ENCODE measurements at regions of chr1 and their contacts with region 1.

Region 1: GRCh38 chr1:152189657-152190442 is 30.8 kb upstream of the RPTN start:
- DNase-seq: peak; percentile 59 to 67 (median 61)
- ATAC-seq: peak; percentile 88
- H3K4me3 ChIP-seq: no peak overlapping the region
- H3K27ac ChIP-seq: no peak overlapping the region
- H3K4me1 ChIP-seq: peaks cover 0 to 8% of the 10 kb centered on the region in 2 experiments; a peak in 1 of 5 replicates
- H3K27me3 ChIP-seq: no peaks in the 10 kb centered on the region
- CTCF ChIP-seq: peak; percentile 79 to 85 (median 80)
- EP300 ChIP-seq: no peak
- POLR2A ChIP-seq: no peak
- RAD21 ChIP-seq: peak; percentile 62 to 78

Region 2: GRCh38 chr1:152141974-152142584 is 47.8 kb before region 1 on chr1:
- CTCF ChIA-PET with region 1: interaction called, 19 read pairs
- POLR2A ChIA-PET with region 1: no interaction called
- in situ Hi-C with region 1: no loop called
- intact Hi-C with region 1: no loop called
- DNase-seq: peak; percentile 15 to 59 (median 17)
- ATAC-seq: peak; percentile 65; the same call in 2 of the 3 replicates
- H3K4me3 ChIP-seq: no peak overlapping the region
- H3K27ac ChIP-seq: no peak overlapping the region
- H3K4me1 ChIP-seq: no peaks in the 10 kb centered on the region
- H3K27me3 ChIP-seq: no peaks in the 10 kb centered on the region
- CTCF ChIP-seq: peak; percentile 64 to 82 (median 75)
- EP300 ChIP-seq: no peak
- POLR2A ChIP-seq: no peak
- RAD21 ChIP-seq: peak; percentile 79 to 81

Region 3: GRCh38 chr1:152347116-152347728 is 157.4 kb after region 1 on chr1:
- CTCF ChIA-PET with region 1: no interaction called
- POLR2A ChIA-PET with region 1: no interaction called
- in situ Hi-C with region 1: no loop called
- intact Hi-C with region 1: loop called (anchors 2 kb)
- DNase-seq: peak; percentile 35 to 70 (median 56)
- ATAC-seq: peak; percentile 77
- H3K4me3 ChIP-seq: no peak overlapping the region
- H3K27ac ChIP-seq: no peak overlapping the region
- H3K4me1 ChIP-seq: no peaks in the 10 kb centered on the region
- H3K27me3 ChIP-seq: no peaks in the 10 kb centered on the region
- CTCF ChIP-seq: peak; percentile 61 to 80 (median 69)
- EP300 ChIP-seq: no peak
- POLR2A ChIP-seq: no peak
- RAD21 ChIP-seq: peak; percentile 22 to 61; a peak in 3 of 4 replicates

Region 4: GRCh38 chr1:152440635-152441471 is 251.0 kb after region 1 on chr1:
- CTCF ChIA-PET with region 1: interaction called, 5 read pairs
- POLR2A ChIA-PET with region 1: no interaction called
- in situ Hi-C with region 1: loop called (anchors 5 kb)
- intact Hi-C with region 1: loop called (anchors 2 kb)
- DNase-seq: peak; percentile 68 to 83 (median 78)
- ATAC-seq: peak; percentile 99
- H3K4me3 ChIP-seq: no peak overlapping the region
- H3K27ac ChIP-seq: no peak overlapping the region
- H3K4me1 ChIP-seq: no peaks in the 10 kb centered on the region
- H3K27me3 ChIP-seq: peaks cover 0 to 7% of the 10 kb centered on the region in 2 experiments; a peak in 1 of 5 replicates
- CTCF ChIP-seq: peak; percentile 86 to 90 (median 88)
- EP300 ChIP-seq: no peak
- POLR2A ChIP-seq: no peak
- RAD21 ChIP-seq: peak; percentile 40 to 70; a peak in 3 of 4 replicates

Region 5: GRCh38 chr1:152459596-152460528 is 270.0 kb after region 1 on chr1:
- CTCF ChIA-PET with region 1: interaction called, 17 read pairs
- POLR2A ChIA-PET with region 1: no interaction called
- in situ Hi-C with region 1: no loop called
- intact Hi-C with region 1: loop called (anchors 1 kb)
- DNase-seq: peak; percentile 38 to 72 (median 62)
- ATAC-seq: peak; percentile 90
- H3K4me3 ChIP-seq: no peak overlapping the region
- H3K27ac ChIP-seq: no peak overlapping the region
- H3K4me1 ChIP-seq: peaks cover 0 to 5% of the 10 kb centered on the region in 2 experiments; a peak in 1 of 5 replicates
- H3K27me3 ChIP-seq: no peaks in the 10 kb centered on the region
- CTCF ChIP-seq: peak; percentile 70 to 80 (median 72)
- EP300 ChIP-seq: no peak
- POLR2A ChIP-seq: no peak
- RAD21 ChIP-seq: peak in 1 of 2 experiments; percentile 24; a peak in 1 of 4 replicates